ENCODE measurements at regions of chr10 and their contacts with region 1.

Region 1: DNA sequence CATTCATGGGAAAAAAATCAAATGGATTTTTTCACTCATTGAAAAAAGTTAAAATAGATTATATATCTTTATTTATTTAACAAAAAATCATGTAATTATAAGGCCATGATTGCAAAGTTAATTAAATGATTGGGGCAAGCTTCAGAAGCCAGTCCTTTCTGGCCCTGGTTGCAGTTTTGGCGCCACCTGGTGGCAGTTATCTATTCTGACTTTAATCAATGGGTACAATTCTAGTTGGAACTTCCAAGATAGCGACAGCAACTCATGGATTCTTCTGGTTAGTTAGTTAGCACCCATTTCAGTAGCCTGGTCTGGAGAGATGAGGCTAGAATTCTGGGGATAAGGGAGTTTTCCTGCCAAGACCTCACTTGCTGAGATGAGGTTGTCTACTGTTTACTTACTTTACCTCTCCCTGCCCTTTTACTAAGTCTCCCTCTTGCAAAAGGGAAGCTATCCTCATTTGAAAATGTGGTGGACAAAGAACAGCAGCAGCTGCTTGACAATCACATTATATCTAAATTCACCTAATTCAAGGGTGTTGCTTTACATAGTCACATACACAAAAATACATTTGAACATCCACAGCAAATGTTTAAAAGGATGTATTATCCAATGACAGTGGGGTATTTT is 42.3 kb downstream of the NOC3L start:
- DNase-seq: no peak
- H3K4me3 ChIP-seq: no peak overlapping the region
- CTCF ChIP-seq: peak; percentile 55

Region 2: DNA sequence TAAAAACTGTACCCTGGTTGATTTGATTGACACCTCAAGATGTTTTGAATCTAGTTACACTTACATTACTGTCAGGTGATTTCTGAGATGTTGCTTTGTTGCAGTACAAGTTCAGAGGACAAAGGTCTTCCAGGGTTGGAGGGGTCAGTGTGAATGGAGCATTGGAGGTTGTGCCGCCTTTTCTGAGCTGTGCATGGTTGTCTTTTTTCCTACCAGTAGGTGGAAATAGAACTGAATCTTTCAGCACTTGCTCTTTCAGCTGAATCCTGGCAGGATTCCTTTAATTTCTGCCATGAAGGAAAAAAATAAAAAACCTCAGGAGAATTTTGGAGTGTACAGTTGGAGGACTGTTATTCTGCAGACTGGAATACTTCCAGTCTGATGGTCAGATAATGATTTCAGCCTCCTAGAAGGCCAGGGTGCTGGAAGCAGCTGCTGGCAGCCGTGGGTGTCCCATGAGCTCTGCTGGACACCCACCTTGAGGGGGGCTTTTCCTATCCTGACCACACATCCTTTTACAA is 244.0 kb before region 1 on chr10:
- CTCF ChIA-PET with region 1: interaction called, 71 read pairs
- POLR2A ChIA-PET with region 1: no interaction called
- DNase-seq: peak; percentile 44
- H3K4me3 ChIP-seq: no peak overlapping the region
- CTCF ChIP-seq: peak; percentile 62

Region 3: GRCh38 chr10:94274142-94274787 is 46.1 kb before region 1 on chr10:
- CTCF ChIA-PET with region 1: interaction called, 21 read pairs
- POLR2A ChIA-PET with region 1: no interaction called
- DNase-seq: no peak
- H3K4me3 ChIP-seq: no peak overlapping the region
- CTCF ChIP-seq: no peak

Region 4: DNA sequence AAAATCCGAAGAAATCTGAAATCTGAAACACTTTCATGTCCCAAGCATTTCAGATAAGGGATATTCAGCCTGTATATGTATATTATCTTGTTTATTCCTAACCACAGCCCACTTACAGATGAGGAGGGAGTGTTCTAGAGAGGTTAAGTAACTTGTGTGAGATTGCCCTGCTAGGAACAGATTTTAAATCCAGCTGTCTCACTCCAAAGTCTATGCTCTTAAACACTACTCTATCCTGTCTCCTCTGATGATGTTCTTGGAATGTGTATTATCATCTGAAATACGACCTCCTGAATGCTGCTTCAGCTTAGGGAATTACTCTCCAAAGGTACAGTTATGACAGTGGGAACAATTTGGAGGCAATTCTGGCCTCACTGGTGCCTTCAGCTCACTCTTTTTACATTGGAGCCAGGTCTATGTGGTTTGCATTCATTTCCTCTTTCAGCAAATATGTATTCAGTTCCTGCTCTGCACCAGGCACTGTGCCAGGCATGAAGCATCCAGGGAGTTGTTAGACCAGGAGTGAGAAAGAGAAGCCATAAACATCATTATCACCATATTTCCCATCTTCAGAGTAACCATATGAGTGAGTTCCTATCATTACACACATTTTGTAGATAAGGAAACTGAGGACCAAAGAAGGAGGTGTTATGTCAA is 27.8 kb before region 1 on chr10:
- CTCF ChIA-PET with region 1: interaction called, 33 read pairs
- POLR2A ChIA-PET with region 1: no interaction called
- DNase-seq: peak; percentile 49
- H3K4me3 ChIP-seq: no peak overlapping the region
- CTCF ChIP-seq: no peak

Region 5: DNA sequence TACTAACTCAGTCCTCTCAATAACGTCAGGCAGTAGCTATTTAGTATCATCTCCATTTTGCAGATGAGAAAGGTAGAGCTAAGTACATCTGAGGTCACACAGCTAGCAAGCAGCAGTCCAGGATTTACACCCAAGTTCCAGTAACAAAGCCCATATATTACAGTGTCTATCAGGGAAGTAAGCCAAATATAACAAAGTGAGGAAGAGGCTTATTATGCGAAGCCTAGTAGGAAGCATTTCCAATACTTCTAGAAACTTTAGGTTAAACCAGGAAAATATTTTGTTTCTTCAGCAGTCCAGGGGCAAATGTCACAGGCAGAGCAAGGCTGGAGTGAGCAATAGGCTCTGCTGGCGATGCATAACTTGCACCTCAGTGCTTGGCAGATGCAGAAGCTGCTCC is 11.5 kb before region 1 on chr10:
- CTCF ChIA-PET with region 1: interaction called, 72 read pairs
- POLR2A ChIA-PET with region 1: no interaction called
- DNase-seq: no peak
- H3K4me3 ChIP-seq: no peak overlapping the region
- CTCF ChIP-seq: no peak

Region 6: DNA sequence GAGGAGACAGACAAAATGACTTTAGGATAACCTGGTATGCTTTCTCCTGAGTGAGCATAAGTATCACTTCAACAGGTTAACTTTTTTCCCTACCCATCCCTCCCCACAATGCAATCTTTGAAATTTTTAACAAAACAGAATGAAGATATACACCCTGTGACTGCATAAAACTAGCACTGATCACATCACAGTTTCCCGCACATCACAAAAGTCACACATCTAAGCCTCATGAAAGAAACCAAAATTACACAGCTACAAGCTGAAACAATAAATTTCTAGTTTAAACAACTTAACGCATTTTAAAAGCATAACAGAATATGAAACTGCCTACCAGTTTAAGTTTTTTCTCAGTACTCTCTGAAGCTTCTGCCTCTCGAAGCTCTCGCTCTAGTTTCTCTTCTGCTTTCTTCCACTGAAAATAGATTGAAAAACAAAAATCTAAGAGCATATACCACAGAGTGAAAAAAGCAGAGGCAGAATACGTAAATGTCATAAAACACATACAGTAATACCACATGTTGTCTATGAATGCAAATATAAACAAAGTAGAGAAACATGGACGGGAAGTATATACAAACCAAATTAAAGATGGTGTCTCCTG is 24.2 kb after region 1 on chr10:
- CTCF ChIA-PET with region 1: interaction called, 24 read pairs
- POLR2A ChIA-PET with region 1: no interaction called
- DNase-seq: no peak
- H3K4me3 ChIP-seq: no peak overlapping the region
- CTCF ChIP-seq: no peak